Activated B cell treated with CpG ODN at 0.5 μM for 24 hours (primary cell): ENCODE measurements at regions of chr20 and their contacts with region 1.

Region 1: DNA sequence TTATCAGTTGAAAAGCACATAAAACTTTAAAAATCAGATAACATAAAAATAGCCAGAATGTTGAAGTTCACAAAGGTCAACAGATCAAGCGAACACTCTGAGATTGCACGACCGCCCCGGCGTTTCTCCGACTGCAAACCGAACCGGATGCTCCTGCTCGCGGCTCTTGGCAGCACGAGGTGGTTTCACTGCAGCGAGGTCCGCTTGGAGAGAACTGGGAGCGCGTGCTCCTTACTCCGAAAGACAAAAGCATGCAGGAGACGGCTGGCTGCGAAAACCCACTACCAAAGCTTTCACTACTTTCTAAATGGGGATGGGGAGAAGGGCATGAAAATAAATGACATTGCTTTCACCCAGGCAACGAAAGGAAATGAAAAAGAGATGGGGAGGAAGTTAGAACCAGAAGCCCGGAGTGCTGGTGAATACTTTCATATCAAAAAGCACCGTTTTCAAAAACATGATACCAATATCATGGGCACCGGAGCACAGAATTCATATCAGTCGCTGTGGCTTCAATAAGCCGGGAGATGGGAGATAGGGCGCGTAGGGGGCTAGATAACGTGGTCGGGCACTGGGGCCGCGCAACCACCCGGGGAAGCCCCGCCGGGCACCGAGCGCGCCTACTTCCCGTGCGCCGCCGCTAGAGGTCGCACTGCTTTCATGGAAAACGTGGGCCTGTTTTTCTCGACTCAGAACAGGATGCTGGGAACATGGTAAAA is 8.3 kb upstream of the ANKRD60 start:
- DNase-seq: peak; percentile 75
- ATAC-seq: peak; percentile 92
- H3K4me3 Mint-ChIP-seq: peak overlapping the region; percentile 93
- H3K27ac Mint-ChIP-seq: peak overlapping the region; percentile 87
- H3K4me1 Mint-ChIP-seq: peaks cover 7% of the 10 kb centered on the region
- H3K27me3 Mint-ChIP-seq: no peaks in the 10 kb centered on the region
- CTCF ChIP-seq: no peak

Region 2: DNA sequence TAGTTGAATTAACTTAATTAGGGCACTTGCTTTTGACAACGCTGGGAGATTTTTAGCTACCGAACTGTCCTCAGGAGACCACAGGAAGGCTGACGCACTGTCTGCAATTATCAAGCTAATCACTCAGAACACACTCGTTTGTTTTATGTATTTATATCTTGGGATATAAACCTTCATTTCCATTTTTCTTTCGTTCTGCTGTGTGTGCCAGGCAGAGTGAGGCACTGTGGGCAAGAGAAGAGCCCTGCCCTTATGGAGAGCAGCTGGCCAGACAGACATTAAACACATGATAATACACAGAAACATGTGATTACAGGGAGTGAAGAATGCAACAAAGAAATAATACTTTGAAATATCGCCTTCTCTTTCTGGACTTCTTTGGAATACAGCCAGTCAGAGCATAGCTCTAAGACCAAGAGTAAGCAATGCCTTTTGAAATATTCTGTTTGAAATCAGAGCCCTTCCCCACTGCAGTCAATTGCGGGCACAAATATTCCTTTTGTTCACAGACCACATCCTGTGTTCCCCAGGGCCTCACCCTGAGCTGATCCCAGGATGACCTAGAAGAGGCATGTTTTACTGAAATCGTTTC is 105.1 kb before region 1 on chr20:
- CTCF ChIA-PET with region 1: no interaction called
- POLR2A ChIA-PET with region 1: no interaction called
- intact Hi-C with region 1: no loop called
- DNase-seq: no peak
- ATAC-seq: no peak
- H3K4me3 Mint-ChIP-seq: no peak overlapping the region
- H3K27ac Mint-ChIP-seq: no peak overlapping the region
- H3K4me1 Mint-ChIP-seq: no peaks in the 10 kb centered on the region
- H3K27me3 Mint-ChIP-seq: peaks cover 49% of the 10 kb centered on the region
- CTCF ChIP-seq: no peak

Region 3: GRCh38 chr20:58388882-58389323 is 152.1 kb after region 1 on chr20 and contains the start of gene VAPB:
- CTCF ChIA-PET with region 1: interaction called, 5 read pairs
- POLR2A ChIA-PET with region 1: no interaction called
- intact Hi-C with region 1: loop called (anchors 2 kb)
- DNase-seq: peak; percentile 99
- ATAC-seq: peak; percentile 97
- H3K4me3 Mint-ChIP-seq: peak within 1 kb of the TSS; percentile 91
- H3K27ac Mint-ChIP-seq: peak within 1 kb of the TSS; percentile 85
- H3K4me1 Mint-ChIP-seq: peaks cover 37% of the 10 kb centered on the region
- H3K27me3 Mint-ChIP-seq: peaks cover 4% of the 10 kb centered on the region
- CTCF ChIP-seq: no peak
- total RNA-seq, gene VAPB: 20.6 and 26.2 TPM in 2 replicates

Region 4: GRCh38 chr20:58447511-58448391 is 211.0 kb after region 1 on chr20:
- CTCF ChIA-PET with region 1: interaction called, 3 read pairs
- POLR2A ChIA-PET with region 1: no interaction called
- intact Hi-C with region 1: loop called (anchors 1 kb)
- DNase-seq: no peak
- ATAC-seq: peak; percentile 57
- H3K4me3 Mint-ChIP-seq: no peak overlapping the region
- H3K27ac Mint-ChIP-seq: no peak overlapping the region
- H3K4me1 Mint-ChIP-seq: peaks cover 16% of the 10 kb centered on the region
- H3K27me3 Mint-ChIP-seq: no peaks in the 10 kb centered on the region
- CTCF ChIP-seq: no peak

Region 5: GRCh38 chr20:58692594-58693226 is 455.9 kb after region 1 on chr20 and contains the start of gene NPEPL1:
- CTCF ChIA-PET with region 1: no interaction called
- POLR2A ChIA-PET with region 1: no interaction called
- intact Hi-C with region 1: loop called (anchors 1 kb)
- DNase-seq: peak; percentile 74
- ATAC-seq: peak; percentile 98
- H3K4me3 Mint-ChIP-seq: peak within 1 kb of the TSS; percentile 75
- H3K27ac Mint-ChIP-seq: no peak within 1 kb of the TSS
- H3K4me1 Mint-ChIP-seq: peaks cover 7% of the 10 kb centered on the region
- H3K27me3 Mint-ChIP-seq: no peaks in the 10 kb centered on the region
- CTCF ChIP-seq: no peak
- total RNA-seq, gene NPEPL1: 18.7 and 21.5 TPM in 2 replicates

Region 6: GRCh38 chr20:58839474-58839874 is 602.7 kb after region 1 on chr20:
- CTCF ChIA-PET with region 1: interaction called, 4 read pairs
- POLR2A ChIA-PET with region 1: no interaction called
- intact Hi-C with region 1: loop called (anchors 2 kb)
- DNase-seq: no peak
- ATAC-seq: peak; percentile 47
- H3K4me3 Mint-ChIP-seq: peak overlapping the region; percentile 24
- H3K27ac Mint-ChIP-seq: no peak overlapping the region
- H3K4me1 Mint-ChIP-seq: peaks cover 5% of the 10 kb centered on the region
- H3K27me3 Mint-ChIP-seq: peaks cover 26% of the 10 kb centered on the region
- CTCF ChIP-seq: no peak

Region 7: DNA sequence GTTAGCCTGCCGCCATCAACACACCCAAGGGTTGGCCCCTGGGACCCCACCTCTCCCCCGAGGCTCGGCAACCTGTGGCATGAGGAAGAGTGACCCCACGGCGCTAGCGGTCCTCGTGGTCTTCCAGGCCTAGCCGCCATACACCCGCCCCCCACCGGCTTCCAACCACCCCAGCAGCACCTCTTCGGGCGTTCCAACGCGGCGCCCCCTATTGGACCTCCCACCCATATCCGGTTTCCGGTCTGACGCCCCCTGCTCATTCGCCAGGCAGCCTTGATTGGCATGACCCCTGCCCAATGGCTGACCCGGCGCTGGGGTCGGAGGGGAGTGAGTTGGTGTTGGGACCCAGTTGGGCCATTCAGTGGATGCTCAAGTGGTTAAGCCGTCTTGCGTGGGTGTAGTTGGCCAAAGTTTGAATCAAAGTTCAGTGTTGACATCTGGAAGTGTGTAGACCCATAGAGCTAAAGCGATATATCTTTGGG is 614.0 kb after region 1 on chr20 and contains the start of gene GNAS-AS1:
- CTCF ChIA-PET with region 1: no interaction called
- POLR2A ChIA-PET with region 1: no interaction called
- intact Hi-C with region 1: loop called (anchors 2 kb)
- DNase-seq: peak; percentile 69
- ATAC-seq: peak; percentile 93
- H3K4me3 Mint-ChIP-seq: peak within 1 kb of the TSS; percentile 89
- H3K27ac Mint-ChIP-seq: no peak within 1 kb of the TSS
- H3K4me1 Mint-ChIP-seq: peaks cover 33% of the 10 kb centered on the region
- H3K27me3 Mint-ChIP-seq: peaks cover 17% of the 10 kb centered on the region
- CTCF ChIP-seq: no peak
- total RNA-seq, gene GNAS-AS1: 1.4 and 1.5 TPM in 2 replicates

Region 8: DNA sequence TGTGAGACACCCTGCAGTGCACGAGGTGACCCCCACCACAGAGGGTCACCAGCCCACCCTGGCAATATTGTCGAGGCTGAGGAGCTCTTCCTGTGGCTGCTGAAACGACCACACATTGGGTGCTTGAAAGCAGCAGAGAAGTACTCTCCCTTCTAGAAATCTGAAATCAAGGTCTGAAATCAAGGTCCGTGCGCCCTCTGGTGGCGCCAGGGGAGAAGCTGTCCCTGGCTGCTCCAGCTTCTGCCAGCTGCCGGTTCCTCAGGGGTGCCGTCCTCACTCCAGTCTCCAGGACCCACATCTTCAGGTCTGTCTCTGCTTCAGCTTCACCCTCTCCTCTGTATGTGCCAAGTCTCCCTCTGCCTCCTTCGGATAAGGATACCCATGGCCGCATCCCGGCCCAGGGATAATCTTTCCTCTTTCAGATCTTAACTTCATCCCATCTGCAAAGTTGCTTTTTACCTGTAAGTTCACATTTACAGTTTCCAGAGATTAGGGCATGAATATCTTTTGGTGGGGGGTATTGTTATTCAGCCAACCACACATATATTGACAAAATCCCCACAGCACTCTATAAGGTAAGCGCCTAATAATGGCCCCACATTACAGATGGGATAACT is 1259.2 kb after region 1 on chr20:
- CTCF ChIA-PET with region 1: no interaction called
- POLR2A ChIA-PET with region 1: no interaction called
- intact Hi-C with region 1: loop called (anchors 2 kb)
- DNase-seq: peak; percentile 59
- ATAC-seq: peak; percentile 40
- H3K4me3 Mint-ChIP-seq: no peak overlapping the region
- H3K27ac Mint-ChIP-seq: no peak overlapping the region
- H3K4me1 Mint-ChIP-seq: no peaks in the 10 kb centered on the region
- H3K27me3 Mint-ChIP-seq: peaks cover 16% of the 10 kb centered on the region
- CTCF ChIP-seq: peak; percentile 92